ENCODE measurements at regions of chr21 and their contacts with region 1.

Region 1: GRCh38 chr21:34745557-34746255 is 76.9 kb downstream of the CLIC6 start:
- DNase-seq: peak; percentile 80
- ATAC-seq: peak; percentile 95

Region 2: DNA sequence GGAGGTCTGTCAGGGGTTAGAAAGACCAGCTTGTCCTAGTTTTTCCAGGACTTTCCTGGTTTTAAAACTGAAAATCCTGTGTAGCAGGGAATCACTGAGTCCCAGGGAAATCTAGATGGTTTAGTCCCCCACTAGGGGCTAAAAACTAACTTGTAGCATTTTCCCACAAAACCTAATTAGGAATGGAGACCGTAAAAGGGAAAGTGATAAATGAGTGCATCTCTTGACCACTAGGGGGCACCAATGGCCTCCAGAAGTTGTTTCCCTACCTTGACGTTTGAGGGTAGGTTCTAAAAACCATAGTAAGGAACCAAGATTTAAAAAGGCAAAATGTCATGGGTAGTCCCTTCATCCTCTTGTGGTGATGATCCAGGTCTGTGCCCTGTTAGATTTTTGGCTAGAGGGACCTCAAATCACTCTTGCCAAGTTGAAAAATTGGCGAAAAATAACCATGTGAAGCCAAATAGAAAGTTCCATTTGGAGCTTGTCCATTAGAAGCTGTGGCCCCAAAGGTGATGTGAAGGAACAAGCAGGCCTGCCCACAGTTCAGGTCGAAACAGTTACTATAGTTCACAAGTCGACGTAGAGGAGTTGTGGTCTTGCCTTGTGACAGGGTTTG is 52.4 kb before region 1 on chr21:
- intact Hi-C with region 1: no loop called
- DNase-seq: no peak
- ATAC-seq: peak; percentile 31

Region 3: GRCh38 chr21:34865928-34866284 is 120.2 kb after region 1 on chr21:
- intact Hi-C with region 1: no loop called
- DNase-seq: no peak
- ATAC-seq: peak; percentile 19

Region 4: GRCh38 chr21:35840197-35840799 is 1094.6 kb after region 1 on chr21:
- intact Hi-C with region 1: loop called (anchors 5 kb)
- DNase-seq: no peak
- ATAC-seq: peak; percentile 73

Region 5: DNA sequence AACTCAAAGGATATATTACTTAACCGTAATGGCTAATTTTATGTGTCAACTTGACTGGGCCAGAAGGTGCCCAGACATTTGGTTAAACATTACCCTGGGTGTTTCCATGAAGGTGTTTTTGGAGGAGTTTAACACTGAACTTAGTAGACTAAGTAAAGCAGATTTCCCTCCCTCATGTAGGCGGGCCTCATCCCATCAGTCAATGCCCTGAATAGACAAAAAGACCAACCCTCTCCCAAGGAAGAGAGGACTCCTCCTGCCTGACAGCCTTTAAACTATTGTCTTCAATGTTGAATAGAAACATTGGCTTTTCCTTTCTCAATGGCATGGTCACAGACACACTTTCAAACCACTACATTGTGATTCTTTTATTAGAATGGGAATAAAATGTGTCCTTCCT is 1192.7 kb after region 1 on chr21:
- intact Hi-C with region 1: loop called (anchors 5 kb)
- DNase-seq: no peak
- ATAC-seq: no peak